ENCODE measurements at regions of chr17 and their contacts with region 1.

Region 1: DNA sequence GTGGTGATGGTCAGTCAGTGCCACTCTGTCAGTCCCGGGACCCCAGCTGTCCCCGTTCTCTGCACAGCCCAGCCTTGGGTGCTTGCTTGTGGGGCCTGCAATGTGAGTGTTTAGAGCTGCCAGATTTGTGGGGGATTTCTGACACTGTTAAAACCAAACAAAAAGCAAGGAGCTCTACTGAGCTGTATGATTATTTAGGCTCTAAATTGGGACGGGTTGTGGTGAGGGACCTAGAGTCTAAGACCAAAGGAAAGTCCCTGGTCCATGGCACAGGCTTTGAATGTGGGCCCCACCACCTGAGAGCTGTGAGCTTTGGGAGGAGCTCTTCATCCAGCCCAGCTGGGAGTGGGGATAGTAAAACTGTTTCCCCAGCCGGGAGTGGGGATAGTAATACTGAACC is 63.3 kb downstream of the KSR1 start:
- DNase-seq: no peak
- ATAC-seq: no peak
- H3K4me3 ChIP-seq: no peak overlapping the region
- H3K27ac ChIP-seq: no peak overlapping the region
- H3K4me1 ChIP-seq: peaks cover 0 to 25% (median 6%) of the 10 kb centered on the region in 12 donors
- H3K27me3 ChIP-seq: no peaks in the 10 kb centered on the region
- CTCF ChIP-seq: no peak
- POLR2A ChIP-seq: no peak

Region 2: DNA sequence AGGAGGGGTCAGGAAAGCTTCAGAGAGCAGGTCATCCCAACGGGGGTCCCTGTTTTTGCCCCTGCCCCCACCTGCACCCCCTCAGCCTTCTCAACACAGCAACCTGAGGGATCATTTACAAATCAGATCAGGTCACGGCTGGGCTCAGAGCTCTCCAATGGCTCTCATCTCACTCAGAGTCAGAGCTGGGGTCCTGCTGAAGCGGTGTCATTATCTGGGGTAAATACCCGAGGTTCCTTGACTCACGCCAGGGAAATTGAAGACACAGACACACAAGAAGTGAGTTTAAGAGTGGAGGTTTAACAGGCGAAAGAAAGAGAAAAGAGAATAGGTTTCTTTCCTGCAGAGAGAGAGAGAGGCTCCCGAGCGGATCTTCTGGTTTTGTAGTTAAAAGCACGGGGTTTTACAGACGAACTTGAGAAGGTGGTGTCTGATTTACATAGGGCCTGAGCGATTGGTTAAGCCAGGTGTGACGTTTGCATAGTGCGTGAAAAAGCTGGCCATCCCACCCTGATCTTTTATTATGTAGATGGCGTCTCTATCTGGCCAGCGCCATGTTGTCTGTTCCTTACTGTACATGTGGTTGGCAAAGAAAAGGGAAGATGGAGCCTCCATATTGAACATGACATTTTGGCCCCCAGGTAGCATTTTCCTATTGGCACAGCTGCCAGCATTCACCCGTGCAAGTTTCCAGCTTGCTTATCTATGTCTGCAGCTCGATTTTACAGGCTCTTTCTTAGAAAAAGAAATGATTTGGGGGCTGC is 174.2 kb before region 1 on chr17:
- intact Hi-C with region 1: no loop called
- DNase-seq: no peak
- ATAC-seq: no peak
- H3K4me3 ChIP-seq: no peak overlapping the region
- H3K27ac ChIP-seq: peak overlapping the region in 1 of 12 donors; percentile 62
- H3K4me1 ChIP-seq: peaks cover 0 to 48% (median 27%) of the 10 kb centered on the region in 12 donors
- H3K27me3 ChIP-seq: no peaks in the 10 kb centered on the region
- CTCF ChIP-seq: no peak
- POLR2A ChIP-seq: no peak

Region 3: DNA sequence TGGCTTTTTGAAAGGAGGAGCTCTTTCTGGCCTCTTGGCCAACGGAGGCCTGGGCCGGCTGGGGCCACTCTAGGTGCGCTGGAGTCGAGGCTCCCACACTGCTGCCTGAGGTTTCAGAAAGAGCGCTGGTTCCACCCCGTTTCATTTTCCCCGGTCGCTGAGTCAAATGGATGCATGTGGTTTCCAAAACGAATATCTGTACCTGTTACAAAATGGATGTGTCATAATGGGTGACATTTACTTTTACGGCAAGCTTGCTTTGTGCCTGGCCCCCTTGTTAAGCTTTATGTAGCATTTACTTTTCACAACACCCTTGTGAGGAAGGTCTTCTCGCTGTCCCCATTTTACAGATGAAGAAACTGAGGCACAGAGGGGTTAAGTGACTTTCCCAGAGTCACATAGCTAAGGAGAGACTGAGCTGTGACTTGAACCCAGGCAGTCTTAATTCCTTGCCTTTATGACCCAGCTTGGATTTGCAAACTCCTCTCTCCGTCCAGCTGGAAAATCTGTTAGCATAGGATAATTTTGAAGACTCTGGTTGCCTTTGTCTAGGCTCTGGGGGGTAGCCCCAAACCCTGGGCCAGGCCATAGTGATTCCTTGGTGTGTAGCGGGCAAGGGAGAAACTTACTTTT is 52.7 kb before region 1 on chr17:
- intact Hi-C with region 1: loop called in 1 of 10 experiments (anchors 10 kb)
- DNase-seq: peak in 3 of 5 donors; percentile 26 to 35 (median 30)
- ATAC-seq: peak in 2 of 4 donors; percentile 48 to 73
- H3K4me3 ChIP-seq: peak overlapping the region in 2 of 12 donors; percentile 5 to 10
- H3K27ac ChIP-seq: peak overlapping the region in 9 of 12 donors; percentile 8 to 72 (median 55)
- H3K4me1 ChIP-seq: peaks cover 0 to 58% (median 18%) of the 10 kb centered on the region in 12 donors
- H3K27me3 ChIP-seq: no peaks in the 10 kb centered on the region
- CTCF ChIP-seq: no peak
- POLR2A ChIP-seq: no peak

Region 4: DNA sequence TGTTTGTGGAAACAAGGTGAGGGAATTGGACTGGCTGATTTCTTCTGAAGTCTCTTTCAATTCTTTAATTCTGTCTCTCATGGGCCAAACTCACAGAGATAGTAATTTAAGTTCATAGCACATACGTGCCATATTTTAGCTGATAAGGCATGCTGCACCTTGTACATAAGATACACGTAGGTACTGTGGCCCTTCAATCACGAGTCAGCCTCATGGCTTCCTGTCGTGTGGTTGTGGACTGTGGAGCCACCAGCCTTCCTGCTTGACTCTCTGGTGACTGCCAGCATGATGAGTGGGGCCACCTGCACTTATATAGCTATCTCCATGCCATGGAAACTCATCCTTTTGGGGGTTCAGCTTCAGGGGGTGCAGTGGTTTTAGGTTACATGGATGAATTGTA is 38.2 kb before region 1 on chr17:
- intact Hi-C with region 1: loop called in 1 of 10 experiments (anchors 5 kb)
- DNase-seq: no peak
- ATAC-seq: no peak
- H3K4me3 ChIP-seq: no peak overlapping the region
- H3K27ac ChIP-seq: no peak overlapping the region
- H3K4me1 ChIP-seq: peaks cover 0 to 42% (median 10%) of the 10 kb centered on the region in 12 donors
- H3K27me3 ChIP-seq: no peaks in the 10 kb centered on the region
- CTCF ChIP-seq: no peak
- POLR2A ChIP-seq: no peak

Measured in heart left ventricle (tissue), 16 donors.